Right ventricle myocardium inferior (tissue), 1 donor: ENCODE measurements at regions of chr7 and their contacts with region 1.

Region 1: DNA sequence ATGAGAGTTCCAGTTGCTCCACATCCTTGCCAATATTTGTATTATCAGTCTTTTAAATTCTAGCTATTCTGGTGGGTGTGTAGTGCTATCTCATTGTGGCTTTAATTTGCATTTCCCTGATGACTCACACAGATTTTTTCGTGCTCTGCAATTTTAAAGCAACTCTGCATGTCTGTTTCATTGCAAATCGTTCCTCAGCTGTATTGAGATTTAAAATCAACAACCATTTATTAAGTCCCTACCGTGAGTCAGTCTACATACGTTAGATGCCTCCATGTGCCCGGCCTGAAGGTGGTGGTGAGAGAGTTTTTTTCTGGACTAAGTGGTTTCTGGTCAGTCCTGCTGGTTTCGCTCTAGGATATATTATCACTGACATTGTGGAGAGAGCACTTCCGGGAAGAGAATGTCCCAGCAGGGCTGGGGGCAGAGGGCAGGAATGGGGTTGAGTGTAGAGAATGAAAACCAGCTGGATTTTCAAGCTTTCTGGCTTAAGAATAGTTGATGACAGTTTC is 8.4 kb upstream of the HYCC1 start:
- DNase-seq: no peak
- ATAC-seq: peak; percentile 48

Region 2: GRCh38 chr7:23055582-23056178 is 33.4 kb after region 1 on chr7:
- intact Hi-C with region 1: loop called (anchors 1 kb)
- DNase-seq: no peak
- ATAC-seq: peak; percentile 67

Region 3: GRCh38 chr7:23633417-23633816 is 611.1 kb after region 1 on chr7:
- intact Hi-C with region 1: no loop called
- DNase-seq: no peak
- ATAC-seq: no peak